Caco-2 (cell line): ENCODE measurements at regions of chr14 and their contacts with region 1.

Region 1: GRCh38 chr14:98444077-98444476 is 827.9 kb downstream of the BCL11B start:
- DNase-seq: no peak
- H3K4me3 ChIP-seq: no peak overlapping the region
- H3K4me3 Mint-ChIP-seq: no peak overlapping the region
- H3K27ac Mint-ChIP-seq: no peak overlapping the region
- H3K4me1 ChIP-seq: no peaks in the 10 kb centered on the region
- H3K4me1 Mint-ChIP-seq: no peaks in the 10 kb centered on the region
- H3K27me3 ChIP-seq: no peaks in the 10 kb centered on the region
- H3K27me3 Mint-ChIP-seq: peaks cover 3% of the 10 kb centered on the region
- CTCF ChIP-seq: no peak

Region 2: GRCh38 chr14:97956581-97957479 is 487.2 kb before region 1 on chr14:
- CTCF ChIA-PET with region 1: interaction called, 12 read pairs
- POLR2A ChIA-PET with region 1: no interaction called
- intact Hi-C with region 1: no loop called
- DNase-seq: no peak
- H3K4me3 ChIP-seq: no peak overlapping the region
- H3K4me3 Mint-ChIP-seq: no peak overlapping the region
- H3K27ac Mint-ChIP-seq: no peak overlapping the region
- H3K4me1 ChIP-seq: no peaks in the 10 kb centered on the region
- H3K4me1 Mint-ChIP-seq: no peaks in the 10 kb centered on the region
- H3K27me3 ChIP-seq: no peaks in the 10 kb centered on the region
- H3K27me3 Mint-ChIP-seq: peaks cover 4% of the 10 kb centered on the region
- CTCF ChIP-seq: no peak